IMR-90 (cell line): ENCODE measurements at regions of chr3 and their contacts with region 1.

Region 1: DNA sequence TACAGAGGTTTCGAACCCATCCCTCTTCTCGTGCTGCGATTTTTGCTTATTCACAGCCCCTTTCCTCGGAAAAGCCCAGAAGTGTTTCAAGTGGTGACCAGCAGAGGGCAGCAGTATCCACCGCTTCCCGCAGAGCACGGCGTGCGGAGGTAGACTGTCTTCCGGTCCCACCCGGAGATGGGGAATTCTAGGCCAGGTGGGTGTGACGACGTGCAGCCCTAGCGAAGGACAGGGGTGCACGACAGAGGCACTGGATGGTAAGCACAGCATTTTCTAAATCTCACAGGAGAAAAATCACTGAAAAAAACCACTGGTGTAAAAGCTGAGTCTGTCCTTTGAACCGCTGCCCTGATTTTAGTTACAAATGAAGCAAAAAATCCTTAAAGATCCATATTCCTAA is 7.4 kb upstream of the PSMD6 start:
- DNase-seq: peak; percentile 60
- ATAC-seq: peak; percentile 97
- H3K4me3 ChIP-seq: peak overlapping the region; percentile 20; the same call in 1 of the 2 replicates
- H3K27ac ChIP-seq: no peak overlapping the region
- H3K4me1 ChIP-seq: peaks cover 3% of the 10 kb centered on the region; the same call in 1 of the 2 replicates
- H3K27me3 ChIP-seq: peaks cover 4% of the 10 kb centered on the region
- CTCF ChIP-seq: peak; percentile 90
- POLR2A ChIP-seq: peak; percentile 52; the same call in 1 of the 2 replicates
- RAD21 ChIP-seq: peak; percentile 97

Region 2: DNA sequence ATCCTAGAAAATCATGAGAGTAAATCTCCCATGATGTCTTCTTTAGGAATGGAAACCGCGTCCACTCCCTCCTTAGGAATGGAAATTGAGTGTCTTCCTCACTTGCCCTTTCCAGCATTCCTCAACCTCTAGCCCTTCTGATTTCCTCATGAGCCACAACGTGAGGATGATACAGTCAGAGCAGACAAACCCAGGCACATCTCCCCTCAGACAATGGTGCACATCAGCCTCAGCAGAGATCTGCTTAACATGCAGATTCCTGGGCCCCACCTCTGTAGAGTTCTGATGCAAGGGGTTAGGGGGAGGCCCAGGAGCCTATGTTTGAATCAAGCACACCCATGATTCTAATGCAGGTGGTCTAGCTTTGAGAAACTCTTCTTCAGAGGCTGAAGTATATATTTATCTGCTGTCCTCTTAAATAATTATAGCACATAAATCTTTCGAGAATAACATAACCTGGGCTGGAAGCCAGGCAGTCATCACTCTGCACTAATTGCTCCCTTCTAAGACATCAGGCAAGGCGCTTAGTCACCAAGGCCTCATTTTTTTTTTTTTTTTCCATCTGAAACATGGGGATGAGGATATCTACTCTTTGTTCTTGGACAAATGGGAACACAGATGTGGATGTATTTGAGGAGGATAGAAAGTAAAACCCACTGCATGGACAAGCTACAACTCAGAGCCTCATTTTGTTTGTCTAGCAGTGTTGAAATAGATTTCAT is 112.8 kb after region 1 on chr3:
- CTCF ChIA-PET with region 1: no interaction called
- POLR2A ChIA-PET with region 1: no interaction called
- dilution Hi-C with region 1: no loop called
- in situ Hi-C with region 1: no loop called
- intact Hi-C with region 1: loop called (anchors 5 kb)
- DNase-seq: peak; percentile 75
- ATAC-seq: peak; percentile 52
- H3K4me3 ChIP-seq: no peak overlapping the region
- H3K27ac ChIP-seq: peak overlapping the region; percentile 31; the same call in 1 of the 2 replicates
- H3K4me1 ChIP-seq: peaks cover 10% of the 10 kb centered on the region
- H3K27me3 ChIP-seq: no peaks in the 10 kb centered on the region
- CTCF ChIP-seq: no peak
- POLR2A ChIP-seq: no peak
- RAD21 ChIP-seq: no peak

Region 3: DNA sequence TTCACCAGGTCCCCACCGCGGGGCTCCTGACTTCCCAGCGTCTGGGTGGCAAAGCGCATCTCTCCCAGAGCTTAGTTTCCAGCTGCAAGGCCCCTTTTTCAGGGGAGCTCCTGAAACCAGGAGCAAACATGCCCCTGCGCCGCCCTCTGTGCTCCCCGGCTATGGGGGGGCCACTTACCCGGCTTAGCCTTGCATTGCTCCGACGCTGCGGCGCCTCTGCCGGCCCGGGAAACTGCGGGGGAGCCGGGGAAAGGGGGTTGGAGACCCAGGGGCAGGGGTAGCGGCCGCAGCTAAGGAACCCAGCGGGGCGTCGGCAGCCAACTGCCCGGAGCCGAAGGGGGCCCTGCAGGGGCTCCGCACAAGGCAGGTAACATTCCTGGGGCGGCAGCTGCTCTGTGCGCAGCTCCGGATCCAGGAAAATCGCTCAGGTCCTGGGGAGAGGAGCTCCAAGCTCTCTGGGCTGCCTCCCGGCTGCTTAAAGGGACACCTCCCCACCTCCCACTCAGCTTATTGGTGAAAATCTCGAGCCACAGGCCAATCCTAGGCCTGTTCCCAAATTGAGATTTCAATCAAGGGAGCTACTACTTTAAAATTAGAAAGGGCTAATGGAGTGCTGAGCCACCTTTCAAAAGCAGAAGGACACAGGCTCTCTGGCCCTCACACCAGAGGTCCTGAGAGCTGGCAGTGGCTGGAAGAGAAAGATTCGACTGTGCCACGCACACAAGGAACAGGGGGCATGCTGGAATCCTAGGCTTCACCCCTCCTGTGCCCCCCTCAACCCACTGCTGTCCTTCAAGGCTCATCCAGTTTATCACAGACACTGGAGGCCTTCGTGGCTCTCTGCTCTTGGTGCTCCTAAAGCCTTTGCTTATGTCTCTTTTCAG is 237.2 kb after region 1 on chr3:
- CTCF ChIA-PET with region 1: interaction called, 6 read pairs
- POLR2A ChIA-PET with region 1: no interaction called
- dilution Hi-C with region 1: no loop called
- in situ Hi-C with region 1: no loop called
- intact Hi-C with region 1: loop called (anchors 1 kb)
- DNase-seq: peak; percentile 68
- ATAC-seq: peak; percentile 90
- H3K4me3 ChIP-seq: peak overlapping the region; percentile 81
- H3K27ac ChIP-seq: peak overlapping the region; percentile 93
- H3K4me1 ChIP-seq: peaks cover 14% of the 10 kb centered on the region
- H3K27me3 ChIP-seq: no peaks in the 10 kb centered on the region
- CTCF ChIP-seq: 0 out of 2 replicates have a peak, but pooled peaks have one; percentile 2
- POLR2A ChIP-seq: peak; percentile 69
- RAD21 ChIP-seq: no peak; the same call in 1 of the 2 replicates

Region 4: GRCh38 chr3:64399205-64399800 is 368.6 kb after region 1 on chr3:
- CTCF ChIA-PET with region 1: interaction called, 3 read pairs
- POLR2A ChIA-PET with region 1: no interaction called
- dilution Hi-C with region 1: no loop called
- in situ Hi-C with region 1: no loop called
- intact Hi-C with region 1: loop called (anchors 1 kb)
- DNase-seq: peak; percentile 70
- ATAC-seq: peak; percentile 89
- H3K4me3 ChIP-seq: no peak overlapping the region
- H3K27ac ChIP-seq: no peak overlapping the region
- H3K4me1 ChIP-seq: peaks cover 2% of the 10 kb centered on the region
- H3K27me3 ChIP-seq: no peaks in the 10 kb centered on the region
- CTCF ChIP-seq: peak; percentile 85
- POLR2A ChIP-seq: no peak
- RAD21 ChIP-seq: peak; percentile 95

Region 5: DNA sequence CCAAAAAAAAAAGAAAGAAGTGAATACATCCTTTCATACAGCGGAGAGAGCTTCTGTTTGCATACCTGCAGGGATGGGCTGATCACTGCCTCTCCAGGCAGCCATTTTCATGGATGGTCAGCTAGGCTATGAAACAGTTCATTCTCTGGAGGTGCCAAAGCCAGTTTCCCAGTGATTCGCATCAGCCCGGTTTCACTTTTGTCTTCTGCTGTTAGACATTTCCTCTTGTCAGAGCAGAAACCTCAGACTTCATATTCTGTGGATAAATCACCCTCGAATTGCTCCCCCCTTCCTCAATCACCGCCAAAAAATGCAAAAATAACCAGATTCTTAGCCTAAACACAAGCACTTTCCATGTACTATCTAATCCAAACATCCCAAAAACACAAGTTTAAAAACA is 431.5 kb after region 1 on chr3:
- CTCF ChIA-PET with region 1: interaction called, 4 read pairs
- POLR2A ChIA-PET with region 1: no interaction called
- dilution Hi-C with region 1: loop called (anchors 25 kb)
- in situ Hi-C with region 1: no loop called
- intact Hi-C with region 1: loop called (anchors 5 kb)
- DNase-seq: peak; percentile 93
- ATAC-seq: peak; percentile 73
- H3K4me3 ChIP-seq: peak overlapping the region; percentile 28; the same call in 1 of the 2 replicates
- H3K27ac ChIP-seq: peak overlapping the region; percentile 95
- H3K4me1 ChIP-seq: peaks cover 21% of the 10 kb centered on the region
- H3K27me3 ChIP-seq: no peaks in the 10 kb centered on the region
- CTCF ChIP-seq: no peak
- POLR2A ChIP-seq: no peak
- RAD21 ChIP-seq: no peak